ENCODE measurements at regions of chr12 and their contacts with region 1.

Region 1: GRCh38 chr12:6592087-6592486 is 15.1 kb downstream of the CHD4 start:
- DNase-seq: no peak
- CTCF ChIP-seq: no peak

Region 2: GRCh38 chr12:6476489-6476888 is 115.6 kb before region 1 on chr12:
- CTCF ChIA-PET with region 1: no interaction called
- POLR2A ChIA-PET with region 1: no interaction called
- DNase-seq: no peak
- CTCF ChIP-seq: no peak

Region 3: GRCh38 chr12:6606293-6607131 is 14.4 kb after region 1 on chr12:
- CTCF ChIA-PET with region 1: interaction called, 6 read pairs
- POLR2A ChIA-PET with region 1: interaction called, 13 read pairs
- DNase-seq: peak; percentile 68
- CTCF ChIP-seq: no peak

Measured in GM10248 (cell line).